ENCODE measurements at regions of chr2 and their contacts with region 1.

Region 1: GRCh38 chr2:231612179-231613053 is 19.8 kb downstream of the TEX44 start:
- DNase-seq: peak; percentile 94 to 96
- H3K4me3 ChIP-seq: peak overlapping the region in 2 of 3 donors; percentile 55 to 67
- H3K27ac ChIP-seq: peak overlapping the region; percentile 99
- H3K4me1 ChIP-seq: peaks cover 11 to 20% of the 10 kb centered on the region in 2 donors
- H3K27me3 ChIP-seq: no peaks in the 10 kb centered on the region
- CTCF ChIP-seq: peak; percentile 99
- POLR2A ChIP-seq: no peak

Region 2: DNA sequence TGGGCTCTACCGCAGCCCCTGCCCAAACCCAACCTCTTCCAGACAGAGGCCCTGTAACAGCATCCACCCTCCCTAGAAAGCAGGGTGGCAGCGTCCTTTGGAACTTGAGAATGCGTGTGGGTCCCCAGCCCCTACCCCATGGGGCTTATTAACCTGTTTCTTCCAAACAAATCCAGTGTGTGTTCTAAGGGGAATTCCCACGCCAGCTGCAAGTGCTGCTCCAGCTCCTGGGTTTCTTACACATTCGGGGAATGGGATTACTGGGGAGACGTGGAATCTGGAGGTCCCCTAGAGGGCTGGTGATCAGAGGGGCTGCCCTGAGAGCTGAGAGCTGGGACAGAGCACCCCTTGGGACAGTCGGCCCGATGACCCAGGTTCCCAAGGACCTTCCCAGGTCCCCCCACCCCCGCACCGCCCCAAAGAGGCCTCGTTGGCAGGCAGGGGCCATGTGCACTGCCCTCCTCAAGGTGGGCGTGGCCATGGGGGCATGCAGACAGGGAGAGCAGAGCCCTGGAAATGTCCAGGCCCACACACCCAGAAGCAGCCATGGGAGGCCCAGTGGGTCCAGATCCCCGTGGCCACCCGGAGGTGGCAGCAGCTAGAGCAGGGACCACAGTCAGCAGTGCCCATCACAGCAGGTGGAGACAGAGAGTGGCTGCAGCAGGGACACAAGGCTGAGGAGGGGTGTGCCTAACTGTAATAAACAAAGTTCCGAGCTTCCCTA is 38.6 kb before region 1 on chr2:
- intact Hi-C with region 1: no loop called
- DNase-seq: no peak
- H3K4me3 ChIP-seq: no peak overlapping the region
- H3K27ac ChIP-seq: no peak overlapping the region
- H3K4me1 ChIP-seq: no peaks in the 10 kb centered on the region
- H3K27me3 ChIP-seq: no peaks in the 10 kb centered on the region
- CTCF ChIP-seq: no peak
- POLR2A ChIP-seq: no peak

Region 3: GRCh38 chr2:231583982-231584381 is 28.4 kb before region 1 on chr2:
- intact Hi-C with region 1: no loop called
- DNase-seq: no peak
- H3K4me3 ChIP-seq: no peak overlapping the region
- H3K27ac ChIP-seq: no peak overlapping the region
- H3K4me1 ChIP-seq: no peaks in the 10 kb centered on the region
- H3K27me3 ChIP-seq: no peaks in the 10 kb centered on the region
- CTCF ChIP-seq: no peak
- POLR2A ChIP-seq: no peak

Region 4: GRCh38 chr2:231640641-231641135 is 28.3 kb after region 1 on chr2:
- intact Hi-C with region 1: no loop called
- DNase-seq: peak; percentile 69 to 75
- H3K4me3 ChIP-seq: no peak overlapping the region
- H3K27ac ChIP-seq: peak overlapping the region; percentile 88 to 89
- H3K4me1 ChIP-seq: peaks cover 10 to 18% of the 10 kb centered on the region in 2 donors
- H3K27me3 ChIP-seq: no peaks in the 10 kb centered on the region
- CTCF ChIP-seq: peak in 1 of 3 donors; percentile 21
- POLR2A ChIP-seq: no peak

Region 5: DNA sequence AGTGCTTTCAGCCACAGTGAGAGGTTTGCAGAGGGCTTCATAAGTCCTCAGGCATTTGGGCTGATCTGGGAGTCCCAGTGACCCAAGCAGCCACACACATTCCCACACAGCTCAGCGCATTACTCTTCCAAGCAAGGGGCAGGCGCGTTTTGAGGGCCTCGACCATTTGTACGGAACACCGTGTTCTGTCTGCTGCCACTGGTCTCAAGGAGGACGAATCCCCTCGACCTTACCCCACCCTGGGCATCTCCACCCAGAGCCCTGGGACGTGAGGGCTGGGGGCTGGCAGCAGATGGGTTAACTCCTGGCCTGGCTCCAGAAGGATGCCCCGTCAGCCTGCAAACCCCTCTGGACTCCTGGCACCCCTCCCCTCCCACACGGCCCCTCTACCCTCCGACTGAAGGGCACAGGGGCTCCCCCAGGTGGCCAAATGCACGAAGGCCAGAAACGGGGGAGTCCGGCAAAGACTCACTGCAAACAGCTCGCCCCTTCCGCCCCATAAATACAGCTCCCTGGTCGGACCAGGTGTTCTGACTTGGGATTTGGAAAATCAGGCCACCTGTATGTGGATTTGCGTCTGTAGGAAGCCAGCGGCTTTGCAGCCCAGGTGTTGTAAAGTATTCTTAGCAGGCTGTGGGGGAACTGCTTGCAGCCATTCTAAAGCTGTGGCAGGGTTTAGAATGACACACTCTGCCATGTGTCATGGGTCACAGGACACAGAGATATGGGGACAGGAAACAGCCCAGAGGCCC is 62.3 kb after region 1 on chr2:
- intact Hi-C with region 1: loop called (anchors 5 kb)
- DNase-seq: peak in 1 of 2 donors; percentile 74
- H3K4me3 ChIP-seq: no peak overlapping the region
- H3K27ac ChIP-seq: peak overlapping the region; percentile 46 to 81
- H3K4me1 ChIP-seq: peaks cover 0 to 10% of the 10 kb centered on the region in 2 donors
- H3K27me3 ChIP-seq: no peaks in the 10 kb centered on the region
- CTCF ChIP-seq: peak; percentile 80 to 87 (median 80)
- POLR2A ChIP-seq: no peak